Naive thymus-derived CD4-positive, alpha-beta T cell (primary cell): ENCODE measurements at regions of chr14 and their contacts with region 1.

Region 1: GRCh38 chr14:70887207-70887681 is 20.0 kb upstream of the PCNX1 start:
- DNase-seq: peak in 1 of 9 donors; percentile 6
- ATAC-seq: peak; percentile 49
- H3K4me3 ChIP-seq: peak overlapping the region; percentile 34
- H3K4me3 Mint-ChIP-seq: peak overlapping the region; percentile 39 to 81 (median 70)
- H3K27ac ChIP-seq: peak overlapping the region; percentile 52
- H3K27ac Mint-ChIP-seq: peak overlapping the region; percentile 53 to 91 (median 87)
- H3K4me1 ChIP-seq: peaks cover 62 to 66% of the 10 kb centered on the region in 2 donors
- H3K4me1 Mint-ChIP-seq: peaks cover 60 to 97% (median 76%) of the 10 kb centered on the region in 7 donors
- H3K27me3 ChIP-seq: no peaks in the 10 kb centered on the region
- H3K27me3 Mint-ChIP-seq: no peaks in the 10 kb centered on the region

Region 2: DNA sequence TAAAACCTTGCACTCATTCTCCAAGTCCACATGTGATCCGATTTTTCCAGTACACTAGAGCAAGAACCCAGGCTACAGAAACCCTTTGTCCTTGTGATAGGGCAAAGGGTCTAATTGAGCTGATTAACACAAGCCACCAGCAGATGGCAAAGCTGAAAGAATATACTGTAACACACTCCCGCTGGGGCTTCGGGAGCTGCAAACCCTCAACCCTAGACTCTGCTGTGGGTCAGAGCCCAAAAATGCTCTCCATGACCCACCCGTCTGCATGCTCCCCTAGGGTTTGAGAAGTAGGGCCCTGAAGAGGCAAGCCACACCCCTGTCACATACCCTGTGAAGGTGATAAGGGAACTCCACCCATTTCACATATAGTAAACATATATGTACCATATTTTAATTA is 13.6 kb before region 1 on chr14:
- CTCF ChIA-PET with region 1: interaction called, 3 read pairs
- POLR2A ChIA-PET with region 1: interaction called, 9 read pairs
- intact Hi-C with region 1: loop called (anchors 1 kb)
- DNase-seq: peak in 3 of 9 donors; percentile 19 to 30 (median 30)
- ATAC-seq: peak; percentile 74
- H3K4me3 ChIP-seq: no peak overlapping the region
- H3K4me3 Mint-ChIP-seq: peak overlapping the region in 3 of 10 donors; percentile 2 to 68 (median 33)
- H3K27ac ChIP-seq: no peak overlapping the region
- H3K27ac Mint-ChIP-seq: peak overlapping the region in 6 of 9 donors; percentile 4 to 97 (median 39)
- H3K4me1 ChIP-seq: peaks cover 11 to 16% of the 10 kb centered on the region in 2 donors
- H3K4me1 Mint-ChIP-seq: peaks cover 6 to 25% (median 15%) of the 10 kb centered on the region in 7 donors
- H3K27me3 ChIP-seq: no peaks in the 10 kb centered on the region
- H3K27me3 Mint-ChIP-seq: no peaks in the 10 kb centered on the region